Activated CD4-positive, alpha-beta memory T cell treated with anti-CD3 and anti-CD28 coated beads, Interleukin-2, amount 10 ng/mL, durations not matched to agents 7 days and 5 days (primary cell): ENCODE measurements at regions of chr9 and their contacts with region 1.

Region 1: GRCh38 chr9:129626079-129626624 is at the start of gene NTMT1:
- DNase-seq: peak; percentile 93
- H3K4me3 Mint-ChIP-seq: peak within 1 kb of the TSS; percentile 81
- H3K27ac Mint-ChIP-seq: peak within 1 kb of the TSS; percentile 88
- H3K4me1 Mint-ChIP-seq: peaks cover 56% of the 10 kb centered on the region
- H3K27me3 Mint-ChIP-seq: peaks cover 8% of the 10 kb centered on the region
- total RNA-seq, gene NTMT1: 34.2 to 38.7 TPM

Region 2: DNA sequence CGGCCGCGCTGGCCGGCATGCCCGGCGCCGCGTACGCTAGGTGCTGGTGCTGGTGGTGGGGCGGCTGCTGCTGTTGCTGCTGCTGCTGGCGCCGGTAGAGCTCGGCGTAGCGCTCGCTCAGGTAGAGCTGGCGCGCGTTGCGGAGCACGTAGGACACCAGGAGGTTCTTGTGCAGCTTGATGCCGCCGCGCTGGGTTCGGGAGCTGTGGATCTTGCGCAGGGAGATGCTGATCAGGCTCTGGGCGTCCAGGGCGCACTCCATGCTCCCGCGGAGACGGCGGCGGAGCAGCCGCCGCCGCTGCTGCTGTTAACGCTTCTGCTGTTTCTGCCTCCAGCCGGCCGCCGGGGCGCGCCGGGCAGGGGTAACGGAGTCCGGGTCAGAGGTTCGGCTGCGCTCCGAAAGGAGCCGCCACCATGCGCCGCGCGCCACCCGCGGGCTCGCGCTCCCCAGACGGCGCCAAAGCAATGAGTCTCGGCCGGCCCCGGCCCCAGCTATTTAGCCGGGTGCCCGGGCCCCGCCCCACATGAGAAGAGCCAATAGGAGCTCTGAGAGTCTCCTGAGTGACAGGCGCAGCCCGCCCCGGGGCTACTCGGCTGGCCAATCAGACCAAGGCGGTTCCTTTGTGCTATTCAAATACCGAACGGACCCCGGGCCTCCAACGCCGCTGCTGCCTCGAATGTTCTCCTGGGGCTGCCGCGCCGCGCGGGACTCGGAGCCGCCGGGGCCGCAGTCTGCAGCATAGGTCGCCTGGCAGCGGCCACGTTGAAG is 448.2 kb before region 1 on chr9 and contains the start of gene IER5L:
- CTCF ChIA-PET with region 1: interaction called, 31 read pairs
- POLR2A ChIA-PET with region 1: no interaction called
- DNase-seq: peak; percentile 94
- H3K4me3 Mint-ChIP-seq: peak within 1 kb of the TSS; percentile 84
- H3K27ac Mint-ChIP-seq: peak within 1 kb of the TSS; percentile 45
- H3K4me1 Mint-ChIP-seq: peaks cover 15% of the 10 kb centered on the region
- H3K27me3 Mint-ChIP-seq: peaks cover 19% of the 10 kb centered on the region
- total RNA-seq, gene IER5L: 2.4 to 3.0 TPM

Region 3: DNA sequence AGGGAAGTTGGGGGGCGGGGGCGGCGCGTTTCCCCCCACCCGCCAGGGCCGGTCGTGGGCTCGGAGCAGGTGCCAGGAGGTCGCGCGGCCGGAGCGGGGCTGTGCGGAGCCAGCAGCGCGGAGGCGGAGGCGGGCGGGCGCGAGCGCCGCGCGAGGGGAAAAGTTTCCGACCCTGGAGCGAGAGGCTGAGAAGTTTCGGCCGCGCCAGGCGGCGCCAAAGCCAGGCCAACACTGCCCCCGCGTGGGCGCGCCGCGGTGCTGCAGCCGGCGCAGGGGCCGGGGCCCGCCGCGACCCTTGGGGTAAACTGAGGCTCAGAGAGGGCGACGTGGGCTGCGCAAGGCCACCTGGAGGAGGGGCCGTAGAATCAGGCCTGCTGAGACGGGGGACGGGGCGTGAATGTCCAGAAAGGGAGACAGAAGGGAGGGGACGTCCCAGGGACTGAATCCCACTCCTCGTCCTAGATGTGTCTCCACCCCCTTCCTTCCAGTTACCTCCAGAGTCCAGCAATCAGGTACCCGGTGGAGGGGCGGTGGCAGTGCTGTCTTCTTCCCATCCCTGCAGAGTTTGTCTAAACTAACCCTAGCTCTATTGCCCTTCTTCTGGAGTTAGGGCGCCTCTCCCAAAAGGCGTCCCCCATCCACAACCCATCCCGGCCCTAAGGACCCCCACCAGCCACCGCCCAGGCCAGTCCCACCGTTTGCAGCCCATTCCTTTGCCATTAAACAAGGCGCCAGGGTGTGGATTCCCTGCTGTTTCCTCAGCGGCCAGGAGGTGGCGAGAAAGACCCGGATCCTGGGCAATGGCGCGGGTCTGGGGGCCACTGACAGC is 15.5 kb before region 1 on chr9:
- CTCF ChIA-PET with region 1: interaction called, 31 read pairs
- POLR2A ChIA-PET with region 1: interaction called, 5 read pairs
- DNase-seq: peak; percentile 74
- H3K4me3 Mint-ChIP-seq: peak overlapping the region; percentile 64
- H3K27ac Mint-ChIP-seq: peak overlapping the region; percentile 40
- H3K4me1 Mint-ChIP-seq: peaks cover 42% of the 10 kb centered on the region
- H3K27me3 Mint-ChIP-seq: no peaks in the 10 kb centered on the region

Region 4: GRCh38 chr9:129641746-129642513 is 15.8 kb after region 1 on chr9 and contains the start of gene ASB6:
- CTCF ChIA-PET with region 1: interaction called, 51 read pairs
- POLR2A ChIA-PET with region 1: interaction called, 44 read pairs
- DNase-seq: peak; percentile 94
- H3K4me3 Mint-ChIP-seq: peak within 1 kb of the TSS; percentile 81
- H3K27ac Mint-ChIP-seq: peak within 1 kb of the TSS; percentile 73
- H3K4me1 Mint-ChIP-seq: peaks cover 25% of the 10 kb centered on the region
- H3K27me3 Mint-ChIP-seq: no peaks in the 10 kb centered on the region
- total RNA-seq, gene ASB6: 22.5 to 23.4 TPM